Activated T-helper 2 cell treated with anti-CD3 and anti-CD28 coated beads, Interferon-gamma antibody, Interleukin-2, Interleukin-4, amounts not matched to agents 10 μg/mL and 5 μg/mL and 100 μg/mL, durations not matched to agents 14 hours and 24 hours and 36 hours (primary cell): ENCODE measurements at regions of chr7 and their contacts with region 1.

Region 1: GRCh38 chr7:98106647-98107445 is at the start of gene LMTK2:
- DNase-seq: peak; percentile 92
- H3K4me3 Mint-ChIP-seq: peak within 1 kb of the TSS; percentile 95
- H3K27ac Mint-ChIP-seq: peak within 1 kb of the TSS; percentile 87
- H3K4me1 Mint-ChIP-seq: peaks cover 20% of the 10 kb centered on the region
- H3K27me3 Mint-ChIP-seq: peaks cover 1% of the 10 kb centered on the region
- total RNA-seq, gene LMTK2: 14.7 and 15.0 TPM in 2 replicates

Region 2: GRCh38 chr7:98021588-98022351 is 85.1 kb before region 1 on chr7:
- intact Hi-C with region 1: loop called (anchors 1 kb)
- DNase-seq: peak; percentile 59
- H3K4me3 Mint-ChIP-seq: no peak overlapping the region
- H3K27ac Mint-ChIP-seq: no peak overlapping the region
- H3K4me1 Mint-ChIP-seq: no peaks in the 10 kb centered on the region
- H3K27me3 Mint-ChIP-seq: no peaks in the 10 kb centered on the region

Region 3: GRCh38 chr7:98168181-98168905 is 61.5 kb after region 1 on chr7:
- intact Hi-C with region 1: loop called (anchors 1 kb)
- DNase-seq: peak; percentile 41
- H3K4me3 Mint-ChIP-seq: no peak overlapping the region
- H3K27ac Mint-ChIP-seq: no peak overlapping the region
- H3K4me1 Mint-ChIP-seq: peaks cover 1% of the 10 kb centered on the region
- H3K27me3 Mint-ChIP-seq: no peaks in the 10 kb centered on the region

Region 4: DNA sequence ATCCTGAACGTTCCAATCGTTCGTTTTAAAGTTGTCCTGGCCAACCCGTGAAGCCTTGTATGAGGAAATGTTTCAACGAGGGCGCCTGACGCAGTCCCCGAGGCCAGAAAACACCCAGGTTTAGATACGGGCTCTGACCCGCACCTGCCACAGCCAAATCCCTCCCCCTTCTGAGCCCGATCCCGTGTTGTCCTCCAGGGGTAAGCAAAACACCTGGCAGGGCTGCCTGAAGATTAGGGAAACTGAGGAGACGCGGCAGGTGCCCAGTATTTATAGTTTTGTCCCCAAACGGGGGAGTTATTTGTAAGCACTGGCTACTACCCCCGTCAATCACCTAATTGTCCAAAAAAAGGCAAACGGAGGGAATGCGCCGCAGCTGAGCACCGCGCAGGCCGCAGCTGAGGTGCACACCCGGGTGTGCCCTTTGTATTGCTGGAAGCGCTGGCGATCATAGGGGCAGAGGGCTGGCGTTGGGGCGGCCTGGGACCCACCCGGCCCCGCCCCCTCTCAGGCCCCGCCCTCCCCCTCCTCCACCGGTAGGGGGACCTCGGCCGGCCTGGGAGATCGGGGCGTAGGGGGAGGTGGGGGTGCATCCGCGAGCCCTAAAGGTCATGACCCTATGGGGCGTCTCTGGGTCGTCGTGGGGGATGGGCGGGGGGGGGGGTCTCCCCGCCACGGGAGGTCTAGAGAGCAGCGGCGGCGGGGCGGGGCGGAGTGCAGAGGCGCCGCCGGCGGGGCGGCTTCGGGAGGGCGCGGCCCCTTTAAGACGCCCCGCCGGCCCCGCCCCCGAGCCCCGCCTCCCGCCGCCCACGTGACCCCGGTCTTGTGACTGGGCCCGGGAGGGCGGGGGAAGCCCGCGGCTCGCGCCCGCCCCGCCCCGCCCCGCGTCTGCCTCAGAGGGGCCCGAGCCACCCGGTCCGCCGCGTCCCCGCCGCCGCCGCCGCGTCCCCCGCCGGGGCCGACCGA is 174.2 kb after region 1 on chr7 and contains the start of gene BRI3:
- intact Hi-C with region 1: loop called (anchors 10 kb)
- DNase-seq: peak; percentile 76
- H3K4me3 Mint-ChIP-seq: peak within 1 kb of the TSS; percentile 86
- H3K27ac Mint-ChIP-seq: peak within 1 kb of the TSS; percentile 80
- H3K4me1 Mint-ChIP-seq: peaks cover 13% of the 10 kb centered on the region
- H3K27me3 Mint-ChIP-seq: no peaks in the 10 kb centered on the region
- total RNA-seq, gene BRI3: 63.6 and 67.6 TPM in 2 replicates